ENCODE measurements at regions of chr1 and their contacts with region 1.

Region 1: DNA sequence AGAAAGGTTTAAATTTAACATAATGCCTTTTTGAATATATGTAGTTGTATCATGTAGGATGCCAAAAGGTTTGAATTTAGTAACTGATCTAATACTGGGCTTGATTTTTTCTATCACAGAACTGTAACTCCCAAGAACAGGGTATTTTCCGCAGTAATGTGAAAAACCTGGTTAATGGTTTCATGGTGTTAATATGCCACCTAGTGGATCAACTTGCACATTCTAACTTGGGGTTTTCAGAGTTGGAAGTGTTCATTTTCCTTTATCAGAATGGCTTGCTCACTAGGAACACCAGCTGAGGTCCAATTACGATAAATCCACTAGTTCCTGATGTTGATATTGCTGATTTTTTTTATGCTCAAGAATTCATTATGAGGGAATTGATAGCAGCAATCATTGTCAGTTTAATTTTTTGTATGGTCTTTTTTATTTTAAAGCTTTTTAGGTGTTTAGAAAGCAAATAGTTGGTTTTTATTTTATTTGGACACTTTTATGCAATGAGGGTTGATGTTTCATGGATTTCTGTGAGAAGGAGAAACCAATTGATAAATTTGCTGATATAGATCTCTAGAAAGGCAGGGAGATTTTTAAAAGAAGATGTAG is 157.2 kb downstream of the PLA2G4A start:
- DNase-seq: peak; percentile 73
- ATAC-seq: peak; percentile 59
- H3K4me3 ChIP-seq: no peak overlapping the region
- H3K27ac ChIP-seq: no peak overlapping the region
- H3K4me1 ChIP-seq: no peaks in the 10 kb centered on the region
- H3K27me3 ChIP-seq: no peaks in the 10 kb centered on the region
- CTCF ChIP-seq: peak; percentile 77

Region 2: GRCh38 chr1:186605762-186606350 is 380.1 kb before region 1 on chr1:
- CTCF ChIA-PET with region 1: no interaction called
- POLR2A ChIA-PET with region 1: interaction called, 3 read pairs
- intact Hi-C with region 1: loop called (anchors 1 kb)
- DNase-seq: peak; percentile 57
- ATAC-seq: peak; percentile 56; the same call in 1 of the 2 replicates
- H3K4me3 ChIP-seq: no peak overlapping the region
- H3K27ac ChIP-seq: peak overlapping the region; percentile 11; the same call in 1 of the 2 replicates
- H3K4me1 ChIP-seq: no peaks in the 10 kb centered on the region
- H3K27me3 ChIP-seq: no peaks in the 10 kb centered on the region
- CTCF ChIP-seq: peak; percentile 79

Region 3: DNA sequence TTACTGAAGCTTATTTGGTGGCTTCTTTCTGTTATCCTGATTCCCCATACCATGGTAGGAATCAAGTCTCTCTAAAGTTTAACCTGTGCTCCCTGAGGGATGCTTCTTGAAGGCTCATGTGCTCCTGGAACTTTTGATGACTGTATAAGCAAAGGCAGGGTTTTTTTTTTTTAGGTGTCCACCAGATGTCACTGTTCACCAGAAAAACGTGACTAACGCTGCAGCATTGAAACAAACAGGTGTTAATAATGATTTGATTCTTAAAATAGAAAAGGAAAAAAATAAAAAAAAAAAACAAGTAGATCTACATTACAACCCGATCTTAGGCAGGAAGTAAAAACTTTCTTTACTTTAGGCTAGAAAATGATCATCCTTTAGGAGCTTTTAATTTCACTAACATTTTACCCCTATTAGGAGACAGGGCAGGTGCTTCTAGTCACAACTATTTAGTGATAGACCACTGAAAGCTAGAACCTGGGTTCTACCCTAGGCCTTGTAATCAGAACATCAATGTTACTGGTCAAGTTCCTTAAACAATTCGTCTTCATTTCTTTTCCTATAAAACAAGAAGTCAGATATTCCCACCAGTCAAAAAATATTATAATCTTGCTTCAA is 65.7 kb after region 1 on chr1:
- CTCF ChIA-PET with region 1: no interaction called
- POLR2A ChIA-PET with region 1: no interaction called
- intact Hi-C with region 1: no loop called
- DNase-seq: peak; percentile 51
- ATAC-seq: no peak
- H3K4me3 ChIP-seq: no peak overlapping the region
- H3K27ac ChIP-seq: no peak overlapping the region
- H3K4me1 ChIP-seq: peaks cover 4% of the 10 kb centered on the region; the same call in 1 of the 2 replicates
- H3K27me3 ChIP-seq: no peaks in the 10 kb centered on the region
- CTCF ChIP-seq: peak; percentile 68

Region 4: GRCh38 chr1:187078321-187078720 is 92.3 kb after region 1 on chr1:
- CTCF ChIA-PET with region 1: no interaction called
- POLR2A ChIA-PET with region 1: no interaction called
- intact Hi-C with region 1: no loop called
- DNase-seq: no peak
- ATAC-seq: no peak
- H3K4me3 ChIP-seq: no peak overlapping the region
- H3K27ac ChIP-seq: no peak overlapping the region
- H3K4me1 ChIP-seq: no peaks in the 10 kb centered on the region
- H3K27me3 ChIP-seq: no peaks in the 10 kb centered on the region
- CTCF ChIP-seq: no peak